HEK293 (cell line): ENCODE measurements at regions of chrX and their contacts with region 1.

Region 1: GRCh38 chrX:27679281-27679680 is 89.1 kb downstream of the DCAF8L2 start:
- H3K4me3 ChIP-seq: no peak overlapping the region
- H3K27ac ChIP-seq: no peak overlapping the region
- H3K4me1 ChIP-seq: no peaks in the 10 kb centered on the region
- CTCF ChIP-seq: no peak

Region 2: DNA sequence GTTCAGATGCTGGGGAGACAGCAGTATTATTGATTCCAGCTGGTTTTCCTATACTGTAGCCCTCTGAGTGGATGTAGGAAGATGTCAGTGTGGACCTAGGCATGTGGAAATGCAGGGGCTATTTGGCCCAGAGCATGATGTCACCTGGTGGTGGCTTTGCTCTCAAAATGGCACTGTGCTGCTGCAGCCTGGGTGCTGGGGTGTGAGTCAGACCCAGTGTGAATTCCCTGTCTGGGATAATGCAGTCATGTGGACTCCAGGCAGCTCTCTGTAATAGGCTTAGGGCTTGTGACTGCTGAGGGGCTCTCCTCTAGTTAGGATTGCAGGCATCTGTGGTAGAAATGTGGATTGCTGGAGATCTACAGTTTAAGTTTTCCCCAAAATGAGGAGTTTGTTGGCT is 18.4 kb before region 1 on chrX:
- CTCF ChIA-PET with region 1: no interaction called
- POLR2A ChIA-PET with region 1: no interaction called
- H3K4me3 ChIP-seq: no peak overlapping the region
- H3K27ac ChIP-seq: no peak overlapping the region
- H3K4me1 ChIP-seq: no peaks in the 10 kb centered on the region
- CTCF ChIP-seq: no peak

Region 3: GRCh38 chrX:27694667-27695066 is 15.4 kb after region 1 on chrX:
- CTCF ChIA-PET with region 1: interaction called, 17 read pairs
- POLR2A ChIA-PET with region 1: no interaction called
- H3K4me3 ChIP-seq: no peak overlapping the region
- H3K27ac ChIP-seq: no peak overlapping the region
- H3K4me1 ChIP-seq: no peaks in the 10 kb centered on the region
- CTCF ChIP-seq: no peak